Activated CD4-positive, alpha-beta T cell treated with anti-CD3 and anti-CD28 coated beads, Interleukin-2, amount 10 ng/mL, durations not matched to agents 24 days and 14 days (primary cell): ENCODE measurements at regions of chr5 and their contacts with region 1.

Region 1: DNA sequence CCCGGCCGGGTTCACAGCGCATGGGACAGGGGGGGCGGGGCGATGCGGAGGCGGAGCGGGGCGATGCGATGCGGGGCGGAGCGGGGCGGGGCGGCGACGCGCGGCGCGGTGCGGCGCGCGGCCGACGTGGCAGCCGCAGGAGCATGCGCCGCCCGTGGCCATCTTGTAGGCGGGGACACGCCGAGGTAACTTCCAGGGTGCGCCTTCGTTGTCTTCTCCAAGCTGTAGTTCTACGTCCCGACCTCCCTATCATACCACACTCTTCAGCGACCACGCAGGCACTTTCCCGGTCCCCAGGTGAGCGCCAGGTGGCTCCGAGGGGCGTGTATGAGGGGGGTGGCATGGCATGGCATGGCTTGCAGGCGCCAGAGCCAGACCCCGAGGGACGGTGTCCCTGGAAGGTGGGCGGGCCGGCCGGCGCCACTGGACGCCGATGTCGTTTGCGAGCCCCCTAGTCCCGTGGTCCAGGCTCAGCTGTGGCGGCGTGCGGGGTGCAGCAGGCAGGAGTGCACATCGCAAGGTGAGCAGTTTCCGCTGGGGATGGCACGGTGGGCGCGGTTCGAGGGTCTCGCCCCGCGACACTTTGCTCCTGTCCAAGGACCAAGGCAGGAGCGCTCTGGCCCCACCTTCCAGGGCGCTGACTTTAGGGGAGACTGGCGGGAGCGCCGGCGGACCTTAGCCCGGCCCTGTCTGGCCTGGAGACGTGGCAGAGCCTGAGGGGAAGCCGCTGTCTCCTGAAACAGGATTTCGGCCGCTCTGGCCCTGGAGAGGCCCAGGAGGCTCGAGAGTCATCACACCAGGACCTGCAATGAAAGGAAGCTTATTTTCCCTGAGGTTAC is at the start of gene PRRC1:
- DNase-seq: peak; percentile 94
- H3K4me3 Mint-ChIP-seq: peak within 1 kb of the TSS; percentile 86
- H3K27ac Mint-ChIP-seq: peak within 1 kb of the TSS; percentile 84
- H3K4me1 Mint-ChIP-seq: peaks cover 25% of the 10 kb centered on the region
- H3K27me3 Mint-ChIP-seq: peaks cover 13% of the 10 kb centered on the region
- total RNA-seq, gene PRRC1: 50.4 and 52.3 TPM in 2 replicates

Region 2: DNA sequence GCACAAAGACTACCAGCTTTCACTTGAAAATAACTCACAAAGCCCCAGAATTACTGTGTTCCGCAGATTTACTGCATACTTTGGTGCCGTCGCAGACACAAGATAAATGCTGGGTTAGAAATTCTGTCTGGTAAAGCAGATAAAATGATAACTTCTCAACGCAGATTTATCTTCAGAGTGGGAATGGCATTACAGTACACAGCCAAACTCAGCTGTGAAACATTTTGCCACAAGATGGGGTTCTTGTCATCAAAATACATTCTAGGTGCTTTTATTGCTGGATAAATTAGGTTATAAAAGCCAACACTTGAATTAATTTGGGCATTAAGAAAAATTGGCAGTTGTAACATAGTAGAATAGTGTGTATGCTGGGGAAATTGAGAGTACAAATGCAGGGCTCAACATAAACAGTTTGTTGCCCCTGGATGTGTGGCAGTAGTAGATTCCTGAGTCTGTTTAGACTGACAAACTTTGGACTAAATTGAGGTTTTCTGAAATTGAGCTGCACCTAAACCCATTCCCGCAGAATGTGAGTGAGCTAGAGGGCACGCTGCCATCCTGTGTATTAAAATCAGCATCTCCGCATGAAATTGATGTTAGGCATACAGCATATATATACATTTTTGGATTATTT is 679.7 kb before region 1 on chr5:
- intact Hi-C with region 1: loop called (anchors 10 kb)
- DNase-seq: no peak
- H3K4me3 Mint-ChIP-seq: no peak overlapping the region
- H3K27ac Mint-ChIP-seq: no peak overlapping the region
- H3K4me1 Mint-ChIP-seq: peaks cover 4% of the 10 kb centered on the region
- H3K27me3 Mint-ChIP-seq: no peaks in the 10 kb centered on the region

Region 3: GRCh38 chr5:127040796-127041520 is 476.7 kb before region 1 on chr5:
- intact Hi-C with region 1: no loop called
- DNase-seq: no peak
- H3K4me3 Mint-ChIP-seq: no peak overlapping the region
- H3K27ac Mint-ChIP-seq: no peak overlapping the region
- H3K4me1 Mint-ChIP-seq: no peaks in the 10 kb centered on the region
- H3K27me3 Mint-ChIP-seq: no peaks in the 10 kb centered on the region

Region 4: DNA sequence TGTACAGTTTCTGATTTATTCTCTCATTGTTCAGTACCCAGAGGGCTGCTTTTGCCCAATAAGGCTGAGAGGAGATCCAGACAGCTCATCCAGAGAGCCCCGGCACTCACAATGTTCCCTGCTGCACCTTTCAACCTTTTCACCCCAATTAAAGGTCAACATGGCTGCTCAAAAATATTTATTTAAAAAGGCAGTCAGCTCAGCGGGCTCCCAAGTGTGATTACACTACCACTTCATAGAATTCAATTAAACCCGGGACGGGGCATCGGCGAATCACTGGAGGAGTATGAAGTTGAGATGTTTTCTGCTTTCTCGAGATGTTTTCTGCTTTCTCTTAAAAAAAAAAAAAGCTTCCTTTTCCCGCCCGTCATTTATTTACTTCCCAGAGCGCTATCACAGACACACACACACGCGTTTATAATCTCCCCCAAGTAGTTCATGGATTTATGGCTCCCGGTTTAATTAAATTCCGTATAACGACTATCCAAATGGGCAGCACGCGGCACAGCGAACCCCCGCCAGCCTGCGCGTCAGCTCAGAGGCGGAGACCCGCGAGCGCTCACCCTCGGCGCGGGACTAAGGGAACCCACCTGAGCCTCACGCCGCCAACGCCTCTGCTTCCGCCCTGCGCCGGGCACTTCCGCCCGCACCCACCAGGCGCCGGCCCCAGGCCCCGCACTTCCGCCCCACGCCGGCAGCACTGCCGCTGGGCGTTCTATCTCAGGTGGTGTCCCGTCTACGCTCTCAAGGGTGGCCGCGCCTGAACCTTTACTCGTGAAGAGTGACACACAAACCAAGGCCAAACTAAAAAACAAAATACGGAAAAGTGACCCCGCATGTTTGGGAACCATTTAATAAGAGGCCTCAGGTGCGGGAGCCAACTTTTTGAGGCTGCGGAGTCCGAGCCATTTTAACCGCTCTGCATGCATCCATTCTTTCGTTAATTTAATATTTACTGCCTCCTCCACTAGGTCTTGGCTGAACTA is 444.5 kb before region 1 on chr5 and contains the start of gene C5orf63:
- intact Hi-C with region 1: loop called (anchors 10 kb)
- DNase-seq: peak; percentile 91
- H3K4me3 Mint-ChIP-seq: peak within 1 kb of the TSS; percentile 91
- H3K27ac Mint-ChIP-seq: peak within 1 kb of the TSS; percentile 90
- H3K4me1 Mint-ChIP-seq: peaks cover 18% of the 10 kb centered on the region
- H3K27me3 Mint-ChIP-seq: no peaks in the 10 kb centered on the region
- total RNA-seq, gene C5orf63: 5.6 and 5.7 TPM in 2 replicates

Region 5: DNA sequence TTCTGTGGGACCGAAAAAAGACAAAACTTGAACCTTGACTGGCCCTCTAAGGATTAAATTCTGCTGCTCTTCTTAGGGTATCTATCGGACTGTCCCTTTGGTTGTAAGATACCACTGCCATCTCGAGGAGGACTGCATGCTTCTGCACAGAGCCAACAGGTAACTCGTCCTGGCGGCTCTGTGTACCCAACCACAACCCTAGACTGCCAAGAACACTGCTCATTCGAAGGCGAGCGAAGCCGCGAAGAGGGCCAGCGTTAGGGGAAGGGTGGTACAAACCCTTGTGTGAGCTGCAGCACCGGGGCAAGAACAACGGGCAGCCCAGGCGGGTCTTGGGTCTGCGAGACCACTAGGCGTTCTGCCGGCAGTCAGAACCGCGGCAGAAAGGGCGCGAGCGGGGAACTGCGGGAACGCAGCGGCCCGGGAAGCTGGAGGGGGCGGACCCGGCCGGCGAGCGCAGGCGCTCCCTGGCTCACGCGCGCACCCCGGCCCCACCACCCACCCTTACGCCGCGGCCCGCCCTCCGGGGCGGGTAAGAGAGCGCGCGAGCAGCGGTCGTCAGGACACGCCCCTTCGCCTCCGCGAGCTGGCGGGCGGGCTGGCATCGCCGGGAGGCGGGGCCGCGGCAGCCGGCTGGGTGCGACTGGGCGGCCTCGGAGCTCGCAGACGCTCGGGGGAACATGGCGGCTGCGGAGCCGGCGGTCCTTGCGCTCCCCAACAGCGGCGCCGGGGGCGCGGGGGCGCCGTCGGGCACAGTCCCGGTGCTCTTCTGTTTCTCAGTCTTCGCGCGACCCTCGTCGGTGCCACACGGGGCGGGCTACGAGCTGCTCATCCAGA is 1576.6 kb after region 1 on chr5 and contains the start of gene ISOC1:
- intact Hi-C with region 1: loop called (anchors 10 kb)
- DNase-seq: peak; percentile 98
- H3K4me3 Mint-ChIP-seq: peak within 1 kb of the TSS; percentile 86
- H3K27ac Mint-ChIP-seq: peak within 1 kb of the TSS; percentile 63
- H3K4me1 Mint-ChIP-seq: peaks cover 25% of the 10 kb centered on the region
- H3K27me3 Mint-ChIP-seq: peaks cover 22% of the 10 kb centered on the region
- total RNA-seq, gene ISOC1: 29.4 and 31.6 TPM in 2 replicates